ENCODE measurements at regions of chr22 and their contacts with region 1.

Region 1: DNA sequence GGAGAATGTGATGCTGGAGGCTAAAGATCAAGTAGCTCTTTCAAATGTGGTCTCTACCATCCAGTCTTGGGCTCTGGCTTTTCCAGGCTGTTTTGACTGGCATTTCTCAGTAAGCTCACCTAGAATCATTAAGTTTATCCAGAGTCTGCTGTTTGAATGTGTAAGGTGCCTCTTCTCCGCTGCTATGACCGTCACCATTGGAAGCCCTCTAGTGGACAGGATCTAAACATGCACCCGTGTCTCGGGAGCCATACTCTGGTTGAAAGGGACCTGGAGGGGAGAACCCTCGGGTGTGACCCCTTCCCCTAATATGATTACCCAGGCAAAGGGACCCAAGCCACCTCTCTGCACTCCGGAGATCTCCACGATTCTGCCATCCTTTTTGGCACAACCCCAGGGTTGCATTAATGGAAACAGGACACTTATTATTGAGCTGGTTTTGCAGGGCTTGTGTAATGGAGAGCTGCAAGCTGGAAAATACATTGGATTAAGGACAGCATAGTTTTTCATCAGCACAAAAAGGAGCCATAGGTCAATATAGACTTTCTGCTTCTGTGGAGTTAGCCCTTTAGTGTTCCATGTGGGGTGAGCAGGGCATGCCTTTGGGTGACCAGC is 191.0 kb upstream of the LARGE1 start:
- DNase-seq: peak; percentile 14 to 36 (median 27)
- H3K4me3 ChIP-seq: no peak overlapping the region
- H3K27ac ChIP-seq: no peak overlapping the region
- H3K4me1 ChIP-seq: no peaks in the 10 kb centered on the region
- H3K27me3 ChIP-seq: no peaks in the 10 kb centered on the region

Region 2: DNA sequence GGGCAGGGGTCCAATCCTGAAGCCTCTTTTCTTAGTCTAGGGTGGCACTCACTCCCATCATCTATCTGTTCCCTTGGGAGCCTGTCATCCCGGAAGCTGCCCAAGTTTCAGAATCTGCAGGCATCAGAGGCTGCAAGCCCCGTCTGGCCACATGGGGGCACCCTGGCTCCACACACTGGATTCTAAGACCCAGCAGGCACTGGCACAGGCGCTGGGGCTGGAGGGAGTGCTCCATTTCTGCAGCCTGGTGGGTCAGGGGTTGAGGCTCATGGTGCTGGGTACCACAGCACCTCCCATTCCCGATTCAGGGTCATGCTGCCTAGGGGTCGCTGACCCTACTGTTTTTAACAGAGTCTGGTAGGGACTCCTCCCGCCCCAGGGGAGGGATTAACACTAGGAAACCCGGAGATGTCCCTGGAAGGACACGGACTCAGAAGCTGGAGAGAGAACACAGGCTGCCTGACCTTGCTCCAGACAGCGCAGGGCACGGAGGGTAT is 809.2 kb before region 1 on chr22:
- CTCF ChIA-PET with region 1: interaction called, 12 read pairs
- POLR2A ChIA-PET with region 1: no interaction called
- DNase-seq: peak; percentile 49 to 65 (median 59)
- H3K4me3 ChIP-seq: no peak overlapping the region
- H3K27ac ChIP-seq: no peak overlapping the region
- H3K4me1 ChIP-seq: peaks cover 0 to 8% (median 2%) of the 10 kb centered on the region in 4 experiments
- H3K27me3 ChIP-seq: no peaks in the 10 kb centered on the region

Region 3: DNA sequence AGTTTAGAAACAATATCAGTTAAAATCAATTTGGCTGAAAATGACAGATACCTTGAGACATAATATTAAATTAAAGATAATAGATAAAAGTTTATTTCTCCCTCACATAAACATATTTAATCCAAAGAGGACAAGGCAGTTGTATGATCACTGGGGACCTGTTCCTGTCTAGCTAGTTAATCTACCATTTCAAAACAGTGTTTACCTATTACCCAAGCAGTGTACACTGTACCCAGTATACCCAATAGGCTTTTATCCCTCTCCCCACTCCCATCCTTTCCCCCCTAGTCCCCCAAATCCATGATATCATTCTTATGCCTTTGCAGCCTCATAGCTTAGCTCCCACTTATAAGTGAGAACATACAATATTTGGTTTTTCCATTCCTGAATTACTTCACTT is 38.7 kb after region 1 on chr22:
- CTCF ChIA-PET with region 1: no interaction called
- POLR2A ChIA-PET with region 1: no interaction called
- DNase-seq: no peak
- H3K4me3 ChIP-seq: no peak overlapping the region
- H3K27ac ChIP-seq: no peak overlapping the region
- H3K4me1 ChIP-seq: no peaks in the 10 kb centered on the region
- H3K27me3 ChIP-seq: no peaks in the 10 kb centered on the region

Measured in common myeloid progenitor, CD34-positive (primary cell).